ENCODE measurements at regions of chr3 and their contacts with region 1.

Region 1: GRCh38 chr3:129942296-129942695 is 32.2 kb upstream of the TRH start:
- DNase-seq: peak; percentile 63 to 80
- H3K4me3 ChIP-seq: no peak overlapping the region
- H3K4me3 Mint-ChIP-seq: no peak overlapping the region
- H3K27ac Mint-ChIP-seq: no peak overlapping the region
- H3K4me1 ChIP-seq: no peaks in the 10 kb centered on the region
- H3K4me1 Mint-ChIP-seq: no peaks in the 10 kb centered on the region
- H3K27me3 ChIP-seq: no peaks in the 10 kb centered on the region
- H3K27me3 Mint-ChIP-seq: peaks cover 2% of the 10 kb centered on the region
- CTCF ChIP-seq: peak; percentile 74 to 77

Region 2: GRCh38 chr3:129966876-129967275 is 24.6 kb after region 1 on chr3:
- CTCF ChIA-PET with region 1: no interaction called
- POLR2A ChIA-PET with region 1: no interaction called
- intact Hi-C with region 1: no loop called
- DNase-seq: no peak
- H3K4me3 ChIP-seq: no peak overlapping the region
- H3K4me3 Mint-ChIP-seq: no peak overlapping the region
- H3K27ac Mint-ChIP-seq: no peak overlapping the region
- H3K4me1 ChIP-seq: 0 out of 2 replicates have a peak, but pooled peaks cover 4% of the 10 kb centered on the region
- H3K4me1 Mint-ChIP-seq: peaks cover 6% of the 10 kb centered on the region
- H3K27me3 ChIP-seq: no peaks in the 10 kb centered on the region
- H3K27me3 Mint-ChIP-seq: no peaks in the 10 kb centered on the region
- CTCF ChIP-seq: no peak

Region 3: GRCh38 chr3:129992781-129993180 is 50.5 kb after region 1 on chr3:
- CTCF ChIA-PET with region 1: interaction called, 10 read pairs
- POLR2A ChIA-PET with region 1: no interaction called
- intact Hi-C with region 1: loop called (anchors 5 kb)
- DNase-seq: peak in 1 of 2 experiments; percentile 32
- H3K4me3 ChIP-seq: no peak overlapping the region
- H3K4me3 Mint-ChIP-seq: no peak overlapping the region
- H3K27ac Mint-ChIP-seq: no peak overlapping the region
- H3K4me1 ChIP-seq: no peaks in the 10 kb centered on the region
- H3K4me1 Mint-ChIP-seq: no peaks in the 10 kb centered on the region
- H3K27me3 ChIP-seq: no peaks in the 10 kb centered on the region; the same call in 1 of the 2 replicates
- H3K27me3 Mint-ChIP-seq: peaks cover 5% of the 10 kb centered on the region
- CTCF ChIP-seq: peak; percentile 28 to 52

Region 4: DNA sequence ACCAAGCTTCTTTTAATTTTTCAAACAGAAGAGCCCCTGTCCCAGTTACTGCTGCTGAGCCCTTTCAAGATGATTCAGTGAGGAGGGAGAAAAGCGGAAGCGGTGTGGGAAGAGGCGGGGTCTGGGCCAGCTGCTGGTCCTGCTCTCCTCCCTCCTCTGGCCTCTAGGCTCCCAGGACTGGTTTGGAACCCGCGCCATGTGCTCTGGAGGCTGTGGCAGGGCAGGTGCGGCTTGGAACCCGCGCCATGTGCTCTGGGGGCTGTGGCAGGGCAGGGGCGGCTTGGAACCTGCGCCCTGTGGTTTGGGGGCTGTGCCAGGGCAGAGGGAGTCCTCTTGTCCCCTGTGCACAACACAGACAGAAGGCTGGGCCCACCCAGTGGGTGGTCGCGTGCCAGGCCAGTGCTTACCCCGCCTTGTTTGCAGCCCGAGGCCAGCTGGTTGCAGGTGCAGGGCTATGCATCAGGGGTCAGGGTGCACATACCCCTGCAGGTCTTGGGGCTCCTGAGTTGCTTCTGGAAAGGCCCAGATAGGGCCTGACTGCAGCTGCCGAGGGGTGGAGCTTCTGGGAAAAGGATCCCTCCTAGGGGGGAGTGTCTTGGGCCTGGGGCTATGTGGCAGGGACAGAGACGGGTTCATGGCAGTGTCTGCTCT is 151.6 kb after region 1 on chr3:
- CTCF ChIA-PET with region 1: interaction called, 34 read pairs
- POLR2A ChIA-PET with region 1: no interaction called
- intact Hi-C with region 1: loop called (anchors 2 kb)
- DNase-seq: no peak
- H3K4me3 ChIP-seq: no peak overlapping the region
- H3K4me3 Mint-ChIP-seq: no peak overlapping the region
- H3K27ac Mint-ChIP-seq: no peak overlapping the region
- H3K4me1 ChIP-seq: no peaks in the 10 kb centered on the region
- H3K4me1 Mint-ChIP-seq: no peaks in the 10 kb centered on the region
- H3K27me3 ChIP-seq: no peaks in the 10 kb centered on the region
- H3K27me3 Mint-ChIP-seq: no peaks in the 10 kb centered on the region
- CTCF ChIP-seq: no peak

Region 5: DNA sequence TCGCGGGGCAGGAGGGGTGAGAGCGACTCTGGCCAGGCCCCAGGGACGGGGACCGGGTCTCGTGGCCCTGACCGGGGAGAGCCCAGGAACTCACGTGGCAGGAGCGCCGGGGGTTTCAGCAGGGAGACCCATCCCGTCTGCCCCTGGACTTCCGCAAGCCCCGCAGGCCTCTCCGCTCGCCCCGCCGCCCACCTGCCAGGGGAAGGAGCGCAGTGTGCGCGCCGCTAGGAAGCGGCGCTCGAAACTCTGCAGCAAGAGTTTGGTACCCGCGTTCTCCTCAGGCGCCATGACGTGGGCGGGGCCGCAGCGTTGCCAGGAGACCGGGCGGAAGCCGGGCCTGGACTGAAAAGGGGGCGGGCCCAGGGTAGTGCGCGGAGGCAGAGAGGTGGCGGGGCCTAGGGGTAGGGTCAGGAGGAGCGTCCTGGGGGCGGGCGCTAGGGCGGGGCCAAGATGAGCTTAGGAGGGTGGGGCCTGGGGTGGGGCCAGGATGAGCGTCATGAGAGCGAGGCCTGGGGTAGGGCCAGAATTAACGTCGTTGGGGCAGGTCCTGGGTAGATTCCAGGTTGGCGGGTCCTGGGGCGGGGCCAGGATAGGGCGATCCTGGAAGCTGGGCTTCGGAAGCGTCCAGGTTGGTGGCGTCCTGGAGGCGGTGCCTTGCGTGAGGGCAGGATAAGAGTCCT is 169.0 kb after region 1 on chr3:
- CTCF ChIA-PET with region 1: interaction called, 17 read pairs
- POLR2A ChIA-PET with region 1: no interaction called
- intact Hi-C with region 1: loop called (anchors 1 kb)
- DNase-seq: peak; percentile 98 to 99
- H3K4me3 ChIP-seq: peak overlapping the region; percentile 79
- H3K4me3 Mint-ChIP-seq: peak overlapping the region; percentile 84
- H3K27ac Mint-ChIP-seq: peak overlapping the region; percentile 90
- H3K4me1 ChIP-seq: no peaks in the 10 kb centered on the region
- H3K4me1 Mint-ChIP-seq: peaks cover 6% of the 10 kb centered on the region
- H3K27me3 ChIP-seq: no peaks in the 10 kb centered on the region
- H3K27me3 Mint-ChIP-seq: no peaks in the 10 kb centered on the region
- CTCF ChIP-seq: no peak

Region 6: DNA sequence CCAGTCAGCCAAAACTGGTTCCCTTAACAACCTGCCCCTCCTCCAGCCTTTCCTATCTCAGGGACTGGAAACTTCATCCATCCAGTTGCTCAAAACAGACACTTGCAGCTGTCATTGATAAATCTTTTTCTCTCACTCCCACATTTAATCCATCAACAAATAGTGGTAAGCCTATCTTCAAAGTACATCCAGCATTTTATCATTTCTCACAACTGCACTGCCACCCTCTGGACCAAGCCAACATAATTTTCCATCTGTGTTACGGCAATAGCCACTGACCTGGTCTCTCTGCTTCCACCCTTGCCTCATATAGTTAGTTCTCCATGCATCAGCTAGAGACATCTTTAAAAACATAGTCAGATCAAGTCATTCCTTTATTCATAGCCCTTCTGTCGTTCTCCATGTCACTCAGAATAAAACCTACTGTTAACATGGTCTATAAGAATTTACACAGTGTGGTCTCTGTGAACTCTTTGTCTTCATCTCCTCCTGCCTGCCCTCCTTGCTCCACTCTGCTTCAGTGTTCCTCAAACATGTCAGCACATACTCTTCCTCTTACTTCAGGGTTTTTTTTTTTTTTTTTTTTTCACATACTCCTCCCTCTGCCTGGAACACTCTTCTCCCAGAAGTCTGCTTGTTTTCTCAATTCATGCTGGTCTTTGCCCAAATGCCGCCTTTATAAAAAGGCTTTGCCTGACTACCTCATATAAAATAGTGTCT is 300.7 kb after region 1 on chr3:
- CTCF ChIA-PET with region 1: no interaction called
- POLR2A ChIA-PET with region 1: no interaction called
- intact Hi-C with region 1: loop called (anchors 5 kb)
- DNase-seq: peak; percentile 45 to 60
- H3K4me3 ChIP-seq: no peak overlapping the region
- H3K4me3 Mint-ChIP-seq: no peak overlapping the region
- H3K27ac Mint-ChIP-seq: no peak overlapping the region
- H3K4me1 ChIP-seq: no peaks in the 10 kb centered on the region
- H3K4me1 Mint-ChIP-seq: no peaks in the 10 kb centered on the region
- H3K27me3 ChIP-seq: no peaks in the 10 kb centered on the region
- H3K27me3 Mint-ChIP-seq: peaks cover 5% of the 10 kb centered on the region
- CTCF ChIP-seq: peak; percentile 43 to 57